ENCODE measurements at regions of chr3 and their contacts with region 1.

Region 1: DNA sequence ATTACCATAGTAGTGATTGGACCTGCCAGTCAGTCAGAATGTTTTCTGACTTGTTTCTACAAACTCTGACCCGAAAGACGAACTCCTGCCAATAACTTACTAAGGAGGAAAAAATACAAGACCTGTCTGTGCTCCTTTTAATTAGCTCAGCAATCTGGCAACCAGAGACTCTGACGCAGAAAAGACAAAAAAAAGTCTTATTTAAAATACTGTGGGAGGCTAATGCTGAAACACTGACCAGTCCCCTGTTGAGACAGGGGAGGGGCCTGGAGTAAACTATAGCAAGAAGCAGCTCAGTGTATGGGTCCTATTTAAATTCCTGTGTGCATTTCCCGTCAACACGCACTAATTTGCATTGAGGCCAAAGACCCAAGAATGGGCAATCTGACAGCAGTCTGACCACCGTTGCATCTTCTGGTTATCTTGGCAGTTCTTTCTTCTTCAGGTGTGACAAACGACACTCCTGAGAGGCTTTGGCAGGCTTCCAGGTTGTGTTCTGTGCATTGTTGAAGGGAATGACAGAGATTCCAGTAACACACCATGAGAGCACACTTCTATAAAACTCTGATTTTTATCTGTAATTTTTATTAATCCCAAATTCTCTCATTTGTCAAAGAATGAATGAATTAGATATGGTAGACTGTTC is 1114.3 kb downstream of the IGSF11 start:
- DNase-seq: no peak
- ATAC-seq: no peak
- H3K4me3 ChIP-seq: no peak overlapping the region
- H3K27ac ChIP-seq: no peak overlapping the region
- H3K4me1 ChIP-seq: no peaks in the 10 kb centered on the region
- H3K27me3 ChIP-seq: no peaks in the 10 kb centered on the region
- CTCF ChIP-seq: no peak
- POLR2A ChIP-seq: no peak
- RAD21 ChIP-seq: no peak

Region 2: DNA sequence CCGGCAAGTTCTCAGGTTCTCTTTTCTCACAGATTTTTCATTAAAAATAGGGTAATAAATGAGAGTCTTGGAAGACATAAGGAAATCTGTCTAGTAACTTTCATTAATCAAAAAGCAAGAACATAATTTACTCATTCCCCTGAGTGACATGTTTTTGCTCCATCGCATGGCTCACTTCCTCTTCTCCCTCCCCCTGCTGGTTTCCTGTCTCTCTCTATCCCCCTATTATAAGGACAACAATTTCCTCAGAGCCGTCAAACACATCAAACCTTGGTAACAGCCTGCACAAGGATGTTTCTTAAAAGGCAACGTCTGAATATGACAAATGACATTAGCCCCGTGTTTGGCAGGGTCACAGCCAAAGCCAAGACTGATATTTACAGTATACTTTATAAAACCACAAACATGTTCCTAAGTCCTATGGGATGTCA is 35.4 kb before region 1 on chr3:
- CTCF ChIA-PET with region 1: no interaction called
- POLR2A ChIA-PET with region 1: no interaction called
- dilution Hi-C with region 1: no loop called
- in situ Hi-C with region 1: no loop called
- intact Hi-C with region 1: no loop called
- DNase-seq: no peak
- ATAC-seq: no peak; the same call in 1 of the 2 replicates
- H3K4me3 ChIP-seq: no peak overlapping the region
- H3K27ac ChIP-seq: no peak overlapping the region
- H3K4me1 ChIP-seq: 0 out of 2 replicates have a peak, but pooled peaks cover 2% of the 10 kb centered on the region
- H3K27me3 ChIP-seq: no peaks in the 10 kb centered on the region
- CTCF ChIP-seq: no peak
- POLR2A ChIP-seq: no peak
- RAD21 ChIP-seq: no peak

Region 3: DNA sequence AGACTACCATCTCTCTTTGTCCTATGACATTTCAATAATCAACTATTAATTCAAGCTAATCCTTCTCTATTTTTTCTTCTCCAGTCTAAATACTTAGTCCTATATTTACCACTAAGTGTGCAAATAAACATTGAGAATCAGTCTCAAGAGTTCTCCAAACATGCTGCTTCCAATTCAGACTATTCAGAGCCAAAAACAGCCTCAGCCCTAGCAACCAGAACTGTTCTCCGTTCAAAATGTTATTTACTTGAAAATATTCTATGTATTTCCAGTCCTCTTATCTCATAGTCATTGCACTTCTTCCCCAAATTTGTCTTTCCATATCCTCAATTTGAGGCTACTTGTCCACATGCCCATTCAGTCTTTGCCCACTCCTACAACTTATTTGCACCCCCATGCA is 308.8 kb after region 1 on chr3:
- CTCF ChIA-PET with region 1: no interaction called
- POLR2A ChIA-PET with region 1: interaction called, 16 read pairs
- dilution Hi-C with region 1: no loop called
- in situ Hi-C with region 1: no loop called
- intact Hi-C with region 1: no loop called
- DNase-seq: no peak
- ATAC-seq: no peak
- H3K4me3 ChIP-seq: no peak overlapping the region
- H3K27ac ChIP-seq: no peak overlapping the region
- H3K4me1 ChIP-seq: no peaks in the 10 kb centered on the region
- H3K27me3 ChIP-seq: no peaks in the 10 kb centered on the region
- CTCF ChIP-seq: no peak
- POLR2A ChIP-seq: no peak
- RAD21 ChIP-seq: no peak